K562 (cell line): ENCODE measurements at regions of chr2 and their contacts with region 1.

Region 1: DNA sequence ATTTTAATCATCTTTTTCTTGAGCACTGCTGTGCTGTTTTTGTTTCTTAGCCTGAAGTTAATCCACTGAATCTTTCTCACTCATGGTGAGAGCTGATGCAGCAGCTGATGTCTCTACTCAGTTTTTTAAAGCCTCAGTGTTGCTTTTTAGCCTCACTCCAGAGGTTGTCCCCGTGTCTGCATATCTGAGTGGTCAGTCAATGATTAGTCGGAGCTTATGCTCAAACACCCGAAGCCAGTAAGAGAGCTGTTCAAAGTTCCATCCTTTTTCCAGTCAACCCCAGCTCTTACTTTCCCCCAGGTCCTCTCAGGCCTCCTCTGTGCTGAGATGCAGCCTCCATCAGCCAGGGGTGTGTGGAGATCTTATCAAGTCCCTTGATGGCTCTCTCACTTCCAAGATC is 81.1 kb downstream of the MBOAT2 start:
- DNase-seq: peak in 2 of 4 experiments; percentile 18 to 20
- ATAC-seq: peak; percentile 14; the same call in 2 of the 3 replicates
- H3K4me3 ChIP-seq: no peak overlapping the region
- H3K27ac ChIP-seq: no peak overlapping the region; the same call in 2 of the 3 replicates
- H3K4me1 ChIP-seq: peaks cover 10 to 52% of the 10 kb centered on the region in 2 experiments
- H3K27me3 ChIP-seq: no peaks in the 10 kb centered on the region
- CTCF ChIP-seq: no peak
- EP300 ChIP-seq: no peak
- POLR2A ChIP-seq: no peak
- RAD21 ChIP-seq: no peak

Region 2: GRCh38 chr2:8893978-8894820 is 28.2 kb before region 1 on chr2:
- CTCF ChIA-PET with region 1: no interaction called
- POLR2A ChIA-PET with region 1: interaction called, 3 read pairs
- in situ Hi-C with region 1: no loop called
- intact Hi-C with region 1: loop called (anchors 2 kb)
- DNase-seq: peak; percentile 52 to 94 (median 74)
- ATAC-seq: peak; percentile 95
- H3K4me3 ChIP-seq: no peak overlapping the region
- H3K27ac ChIP-seq: peak overlapping the region; percentile 99
- H3K4me1 ChIP-seq: peaks cover 13 to 35% of the 10 kb centered on the region in 2 experiments; a peak in 4 of 5 replicates
- H3K27me3 ChIP-seq: no peaks in the 10 kb centered on the region
- CTCF ChIP-seq: no peak
- EP300 ChIP-seq: peak; percentile 95
- POLR2A ChIP-seq: no peak
- RAD21 ChIP-seq: no peak

Region 3: DNA sequence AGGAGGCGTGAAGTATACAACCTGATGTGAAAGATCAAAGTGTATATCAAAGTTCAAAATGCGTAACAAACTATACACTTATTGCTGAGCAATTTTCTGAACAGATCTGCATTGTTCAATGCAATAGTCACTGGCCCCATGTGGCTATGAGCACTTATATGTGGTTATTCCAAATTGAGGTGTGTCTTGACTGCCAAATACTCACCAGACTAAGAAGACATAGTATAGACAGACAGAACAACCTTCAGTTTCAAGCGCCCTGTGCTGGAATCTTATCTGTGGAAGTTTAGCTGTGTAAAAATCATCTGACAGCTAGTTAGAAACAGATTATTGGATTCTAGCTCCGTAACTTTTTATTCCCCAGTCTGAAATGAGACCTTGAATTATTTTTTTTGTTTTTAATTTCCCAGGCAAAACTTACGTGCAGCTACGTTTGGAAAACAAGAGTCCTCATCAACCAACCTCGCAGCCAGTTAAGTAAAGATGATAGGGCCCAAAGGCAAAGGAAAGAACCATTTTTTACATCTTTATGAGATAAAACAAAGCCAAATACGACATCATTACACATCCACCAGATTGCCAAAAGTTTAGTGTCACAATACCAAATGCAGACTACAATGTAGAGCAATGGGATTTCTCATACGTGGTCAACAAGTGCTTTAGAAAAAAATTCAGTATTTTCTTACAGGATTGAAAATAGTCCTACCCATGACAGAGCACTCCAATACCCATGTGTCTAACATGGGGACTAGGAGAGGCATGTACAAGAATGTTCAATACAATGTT is 43.9 kb after region 1 on chr2:
- CTCF ChIA-PET with region 1: no interaction called
- POLR2A ChIA-PET with region 1: no interaction called
- in situ Hi-C with region 1: no loop called
- intact Hi-C with region 1: no loop called
- DNase-seq: peak in 2 of 4 experiments; percentile 17 to 37
- ATAC-seq: peak; percentile 88
- H3K4me3 ChIP-seq: no peak overlapping the region
- H3K27ac ChIP-seq: peak overlapping the region; percentile 32
- H3K4me1 ChIP-seq: peaks cover 0 to 16% of the 10 kb centered on the region in 2 experiments; a peak in 3 of 5 replicates
- H3K27me3 ChIP-seq: no peaks in the 10 kb centered on the region
- CTCF ChIP-seq: no peak
- EP300 ChIP-seq: no peak
- POLR2A ChIP-seq: no peak
- RAD21 ChIP-seq: no peak